ENCODE measurements at regions of chr6 and their contacts with region 1.

Region 1: DNA sequence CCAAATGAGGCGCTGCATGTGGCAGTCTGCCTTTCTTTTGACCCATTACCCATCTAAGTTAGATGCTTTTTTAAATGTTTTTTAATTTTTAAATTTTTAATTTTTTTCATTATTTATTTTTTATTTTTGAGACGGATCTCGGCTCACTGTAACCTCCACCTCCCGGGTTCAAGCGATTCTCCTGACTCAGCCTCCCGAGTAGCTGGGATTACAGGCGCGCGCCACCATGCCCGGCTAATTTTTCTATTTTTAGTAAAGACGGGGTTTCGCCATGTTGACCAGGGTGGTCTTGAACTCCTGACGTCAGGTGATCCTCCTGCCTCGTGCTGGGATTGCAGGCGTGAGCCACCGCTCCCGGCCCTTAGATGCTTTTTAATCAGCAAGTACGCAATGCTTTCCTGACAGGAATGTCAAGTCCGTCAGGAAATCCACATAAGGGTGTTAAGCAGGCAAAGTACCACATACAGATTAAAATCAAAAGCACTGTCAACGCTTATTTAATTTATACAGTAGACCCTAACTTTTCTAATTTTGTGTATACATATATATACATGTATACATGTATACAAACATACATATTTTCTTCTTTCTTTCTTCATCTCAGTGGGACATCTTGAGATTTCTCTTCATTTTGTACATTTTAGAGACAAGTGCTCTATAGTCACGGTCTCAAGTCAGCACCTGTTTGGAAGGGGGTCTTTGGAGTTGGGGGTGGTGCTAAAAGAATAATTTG is 995 bp upstream of the GSTA4 start:
- DNase-seq: peak; percentile 39
- H3K4me3 Mint-ChIP-seq: peak overlapping the region; percentile 84
- H3K27ac Mint-ChIP-seq: peak overlapping the region; percentile 88
- H3K4me1 Mint-ChIP-seq: peaks cover 20% of the 10 kb centered on the region
- H3K27me3 Mint-ChIP-seq: no peaks in the 10 kb centered on the region
- CTCF ChIP-seq: no peak

Region 2: DNA sequence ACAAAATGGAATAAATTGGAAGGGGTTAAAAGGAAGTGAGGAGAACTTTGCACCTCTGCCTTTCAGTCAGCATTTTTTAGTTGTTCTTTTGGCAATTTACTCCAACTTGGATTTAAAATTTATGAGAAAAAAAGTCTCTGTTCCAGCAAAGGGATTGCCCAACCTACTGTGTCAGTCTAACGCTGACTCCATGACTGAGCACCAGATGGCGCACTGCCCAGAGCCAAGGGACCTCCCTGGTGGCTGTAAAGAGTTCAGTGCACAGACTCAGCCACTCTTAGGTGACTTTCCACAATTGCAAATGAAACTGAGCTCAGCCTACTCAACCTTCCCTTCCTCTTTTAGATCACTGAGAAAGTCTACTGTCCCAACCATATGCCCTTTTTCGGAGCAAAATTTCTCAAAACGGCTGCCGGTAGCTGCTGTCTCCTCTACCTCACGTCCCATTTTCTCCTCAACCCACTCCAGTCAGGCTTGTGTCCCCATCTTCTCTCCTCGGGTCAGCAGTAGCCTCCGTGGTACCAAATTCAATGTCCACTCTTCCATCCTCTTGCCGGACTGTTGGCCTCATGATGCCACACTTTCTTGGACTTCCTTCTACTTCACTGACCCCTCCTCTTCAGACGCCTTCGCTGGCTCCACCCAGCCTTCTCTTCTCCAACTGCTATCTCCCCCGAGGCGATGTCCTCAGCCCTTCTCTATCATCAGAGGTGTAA is 271.5 kb before region 1 on chr6:
- CTCF ChIA-PET with region 1: interaction called, 3 read pairs
- intact Hi-C with region 1: loop called (anchors 10 kb)
- DNase-seq: peak; percentile 78
- H3K4me3 Mint-ChIP-seq: no peak overlapping the region
- H3K27ac Mint-ChIP-seq: no peak overlapping the region
- H3K4me1 Mint-ChIP-seq: peaks cover 23% of the 10 kb centered on the region
- H3K27me3 Mint-ChIP-seq: no peaks in the 10 kb centered on the region
- CTCF ChIP-seq: peak; percentile 66

Region 3: GRCh38 chr6:52815167-52816092 is 180.6 kb before region 1 on chr6:
- CTCF ChIA-PET with region 1: no interaction called
- intact Hi-C with region 1: loop called (anchors 2 kb)
- DNase-seq: peak; percentile 61
- H3K4me3 Mint-ChIP-seq: no peak overlapping the region
- H3K27ac Mint-ChIP-seq: no peak overlapping the region
- H3K4me1 Mint-ChIP-seq: no peaks in the 10 kb centered on the region
- H3K27me3 Mint-ChIP-seq: peaks cover 45% of the 10 kb centered on the region
- CTCF ChIP-seq: peak; percentile 58

Region 4: DNA sequence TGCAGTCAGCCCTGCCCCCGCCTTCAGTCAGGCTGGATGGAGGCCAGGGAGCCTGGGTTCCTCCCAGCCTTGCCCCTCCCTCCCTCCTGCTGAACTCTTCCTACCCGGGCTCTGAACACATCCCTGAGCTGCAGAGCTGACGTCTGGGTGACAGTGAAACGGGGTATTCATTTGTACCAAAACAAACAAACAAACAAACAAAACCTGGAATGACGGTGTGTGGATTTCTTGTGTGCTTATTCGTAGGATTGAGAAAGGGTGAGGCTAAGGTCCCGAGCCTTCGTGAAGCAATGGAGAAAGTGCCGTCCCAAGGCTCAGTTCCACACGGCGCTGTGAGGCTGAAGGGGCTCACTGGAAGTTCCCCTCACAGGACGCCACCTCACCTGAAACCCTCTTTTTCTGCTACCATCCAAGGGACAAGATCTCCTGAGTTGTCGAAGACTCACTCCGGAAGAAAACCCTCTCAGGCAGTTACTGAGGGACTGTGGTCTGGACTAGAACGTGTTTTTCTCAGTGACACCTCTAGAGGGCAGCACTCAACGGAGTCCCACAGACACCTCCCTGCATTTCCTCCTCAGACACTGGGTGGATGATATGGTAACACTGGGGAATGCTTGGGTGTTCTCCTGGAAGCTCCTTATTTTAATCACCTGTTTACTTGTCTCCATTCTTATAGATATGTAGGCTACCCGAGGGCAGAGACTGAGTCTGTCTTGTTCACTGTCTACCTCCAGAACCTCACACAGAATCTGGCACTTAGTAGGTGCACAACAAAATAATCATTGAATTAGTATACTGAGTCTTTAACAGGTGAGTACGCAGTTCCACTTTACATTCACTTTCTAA is 113.9 kb before region 1 on chr6:
- CTCF ChIA-PET with region 1: interaction called, 3 read pairs
- intact Hi-C with region 1: loop called (anchors 5 kb)
- DNase-seq: peak; percentile 70
- H3K4me3 Mint-ChIP-seq: peak overlapping the region; percentile 84
- H3K27ac Mint-ChIP-seq: peak overlapping the region; percentile 68
- H3K4me1 Mint-ChIP-seq: no peaks in the 10 kb centered on the region
- H3K27me3 Mint-ChIP-seq: peaks cover 11% of the 10 kb centered on the region
- CTCF ChIP-seq: peak; percentile 80

Measured in Calu3 (cell line).